Calu3 (cell line): ENCODE measurements at regions of chr14 and their contacts with region 1.

Region 1: GRCh38 chr14:37985826-37986470 is 221.8 kb upstream of the SSTR1 start:
- DNase-seq: peak; percentile 51
- H3K4me3 Mint-ChIP-seq: no peak overlapping the region
- H3K27ac Mint-ChIP-seq: no peak overlapping the region
- H3K4me1 Mint-ChIP-seq: no peaks in the 10 kb centered on the region
- H3K27me3 Mint-ChIP-seq: peaks cover 12% of the 10 kb centered on the region
- CTCF ChIP-seq: peak; percentile 63

Region 2: DNA sequence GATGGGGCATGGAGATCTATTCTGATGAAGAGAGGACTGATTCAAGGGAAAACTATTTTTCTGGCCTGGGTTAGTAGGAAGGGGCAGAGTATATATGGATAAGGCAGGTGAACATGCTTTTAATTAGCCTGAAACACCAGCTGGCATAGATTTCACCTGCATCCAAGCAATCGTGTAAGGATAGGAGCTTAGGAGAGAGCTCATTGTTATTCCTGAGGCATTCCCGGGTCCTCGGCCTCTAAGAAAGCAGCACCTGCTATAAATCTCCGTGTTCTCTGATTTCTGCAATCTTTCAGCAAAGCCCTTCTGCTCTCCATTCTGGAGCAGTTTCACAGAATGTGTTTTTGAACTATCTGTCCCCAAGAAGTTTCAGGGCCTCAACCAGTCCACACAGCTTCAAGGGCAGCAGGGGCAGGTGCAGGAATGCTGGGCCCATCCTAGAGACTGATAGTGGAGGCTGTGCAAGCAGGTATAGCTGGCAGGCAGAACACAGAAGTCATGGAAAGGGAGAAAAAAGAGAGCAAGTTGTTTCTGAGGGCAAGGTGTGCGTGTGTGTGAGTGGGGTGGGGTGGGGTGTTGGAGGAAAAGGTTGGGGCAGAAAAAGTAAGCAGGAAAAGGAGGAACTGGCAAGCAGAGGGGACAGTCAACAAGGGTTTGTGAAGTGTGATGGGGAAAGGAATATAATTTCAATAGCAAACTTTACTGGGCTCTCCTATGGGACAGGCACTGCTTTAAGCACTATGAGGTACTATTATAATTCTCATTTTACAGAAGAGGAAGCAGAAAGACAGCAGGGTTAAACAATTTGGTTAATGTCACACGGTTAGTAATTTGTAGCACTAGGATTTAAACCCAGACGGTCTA is 18.0 kb after region 1 on chr14:
- CTCF ChIA-PET with region 1: no interaction called
- intact Hi-C with region 1: no loop called
- DNase-seq: no peak
- H3K4me3 Mint-ChIP-seq: no peak overlapping the region
- H3K27ac Mint-ChIP-seq: no peak overlapping the region
- H3K4me1 Mint-ChIP-seq: no peaks in the 10 kb centered on the region
- H3K27me3 Mint-ChIP-seq: peaks cover 13% of the 10 kb centered on the region
- CTCF ChIP-seq: no peak

Region 3: DNA sequence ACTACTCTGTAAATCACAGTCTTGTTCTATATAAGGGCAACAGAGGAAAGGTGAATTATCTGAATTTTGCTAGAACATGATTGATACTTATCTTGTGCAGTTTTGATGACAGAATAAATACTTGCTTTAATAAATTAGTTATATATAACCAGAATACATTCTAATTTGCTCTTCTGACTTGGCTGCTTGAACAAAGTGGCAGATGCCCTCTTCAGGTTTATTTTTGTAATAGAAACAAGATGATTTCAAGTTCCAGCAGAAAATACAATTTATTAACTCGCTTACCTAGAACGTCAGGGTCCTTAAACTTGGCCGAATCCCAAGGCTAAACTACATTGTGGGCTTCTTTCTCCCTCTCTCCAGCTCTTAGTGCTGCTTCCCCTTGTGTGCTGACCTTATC is 164.1 kb after region 1 on chr14:
- CTCF ChIA-PET with region 1: no interaction called
- intact Hi-C with region 1: loop called (anchors 5 kb)
- DNase-seq: no peak
- H3K4me3 Mint-ChIP-seq: no peak overlapping the region
- H3K27ac Mint-ChIP-seq: no peak overlapping the region
- H3K4me1 Mint-ChIP-seq: no peaks in the 10 kb centered on the region
- H3K27me3 Mint-ChIP-seq: peaks cover 7% of the 10 kb centered on the region
- CTCF ChIP-seq: no peak

Region 4: GRCh38 chr14:38197001-38197783 is 211.2 kb after region 1 on chr14:
- CTCF ChIA-PET with region 1: no interaction called
- intact Hi-C with region 1: loop called (anchors 2 kb)
- DNase-seq: no peak
- H3K4me3 Mint-ChIP-seq: no peak overlapping the region
- H3K27ac Mint-ChIP-seq: no peak overlapping the region
- H3K4me1 Mint-ChIP-seq: no peaks in the 10 kb centered on the region
- H3K27me3 Mint-ChIP-seq: peaks cover 8% of the 10 kb centered on the region
- CTCF ChIP-seq: peak; percentile 16